Transverse colon (tissue), 4 donors: ENCODE measurements at regions of chr14 and their contacts with region 1.

Region 1: DNA sequence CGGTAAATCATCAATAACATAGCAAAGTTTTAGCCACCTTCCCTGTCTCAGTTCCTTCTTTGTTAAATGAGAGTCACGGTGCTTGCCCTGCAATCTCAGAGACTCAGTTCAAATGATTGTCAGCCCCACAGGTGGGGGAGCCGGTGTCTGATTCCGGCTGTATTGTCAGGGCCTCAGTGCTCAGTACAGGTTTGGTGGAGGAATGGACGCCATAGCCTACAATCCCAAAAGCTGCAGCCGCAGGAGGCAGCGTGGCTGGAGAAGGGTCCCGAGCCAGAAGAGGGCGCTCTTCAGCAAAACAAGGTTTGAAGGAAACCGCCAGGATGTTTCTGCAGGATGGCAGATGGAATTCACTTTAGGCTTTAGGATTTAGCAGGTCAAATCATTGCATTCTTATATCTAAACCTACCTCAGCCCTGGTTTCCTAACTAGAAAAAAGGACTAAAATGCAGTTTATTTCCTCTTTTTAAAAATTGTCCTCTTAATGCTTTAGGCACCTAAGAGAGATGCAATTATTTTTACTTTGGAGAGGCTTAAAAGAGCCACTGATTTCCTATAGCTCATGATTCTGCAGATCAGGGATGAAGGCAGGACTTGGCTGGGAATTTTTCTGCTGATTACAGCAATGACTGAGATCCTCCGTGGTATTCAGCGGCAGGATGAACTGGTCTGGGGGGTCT is 29.2 kb downstream of the FOS start:
- DNase-seq: peak; percentile 92
- H3K4me3 ChIP-seq: no peak overlapping the region
- H3K27ac ChIP-seq: no peak overlapping the region
- H3K4me1 ChIP-seq: peaks cover 6 to 21% (median 15%) of the 10 kb centered on the region in 4 donors
- H3K27me3 ChIP-seq: no peaks in the 10 kb centered on the region
- CTCF ChIP-seq: peak; percentile 87 to 96 (median 90)
- EP300 ChIP-seq: no peak
- POLR2A ChIP-seq: no peak

Region 2: GRCh38 chr14:75132382-75133086 is 175.3 kb before region 1 on chr14:
- in situ Hi-C with region 1: loop called (anchors 5 to 10 kb)
- intact Hi-C with region 1: no loop called
- DNase-seq: peak; percentile 42
- H3K4me3 ChIP-seq: no peak overlapping the region
- H3K27ac ChIP-seq: peak overlapping the region; percentile 26 to 69 (median 51)
- H3K4me1 ChIP-seq: peaks cover 11 to 29% (median 15%) of the 10 kb centered on the region in 4 donors
- H3K27me3 ChIP-seq: no peaks in the 10 kb centered on the region
- CTCF ChIP-seq: peak; percentile 64 to 92 (median 73)
- EP300 ChIP-seq: no peak
- POLR2A ChIP-seq: no peak

Region 3: DNA sequence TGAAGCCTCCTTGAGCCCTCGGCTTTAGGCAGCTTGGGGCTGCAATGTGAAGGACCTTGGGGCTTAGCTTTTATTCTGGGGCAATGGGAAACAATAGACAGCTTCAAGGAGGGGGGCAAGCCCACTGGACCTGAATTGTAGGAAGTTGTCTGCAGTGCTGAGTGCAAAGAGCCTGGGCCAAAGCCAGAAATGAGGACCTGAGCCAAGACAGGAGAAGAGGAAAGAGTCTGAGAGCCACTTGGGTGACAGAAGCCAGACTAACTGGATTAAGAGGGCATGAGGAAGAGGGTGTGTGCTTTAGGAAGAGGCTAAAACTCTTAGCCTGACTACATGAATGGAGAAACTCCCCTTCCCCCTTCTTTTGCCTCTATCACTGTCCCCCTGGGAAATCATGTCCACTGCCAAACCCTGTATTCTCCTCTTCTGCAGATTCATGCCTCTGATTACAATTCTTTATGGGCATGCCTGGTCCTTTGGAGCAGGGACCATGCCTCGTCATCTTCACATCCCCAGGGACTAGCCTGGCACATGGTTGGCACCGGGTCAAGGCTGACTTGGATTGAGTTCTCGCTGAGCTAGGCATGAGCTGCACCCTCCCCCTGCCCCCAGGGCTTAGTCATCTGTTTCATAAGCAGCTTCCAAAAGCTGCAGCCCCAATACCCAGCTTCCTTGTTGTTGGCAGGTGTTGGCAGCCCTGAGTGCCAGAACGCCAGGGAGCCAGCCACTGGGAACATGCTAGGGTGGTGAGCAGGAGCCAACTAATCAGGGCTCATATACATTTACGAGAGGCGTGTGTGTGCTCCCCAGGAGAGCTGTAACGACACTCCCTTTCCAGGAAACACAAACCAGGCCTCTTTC is 92.2 kb after region 1 on chr14:
- in situ Hi-C with region 1: loop called in 1 of 4 experiments (anchors 25 kb)
- intact Hi-C with region 1: no loop called
- DNase-seq: peak; percentile 94
- H3K4me3 ChIP-seq: no peak overlapping the region
- H3K27ac ChIP-seq: peak overlapping the region; percentile 87 to 91 (median 88)
- H3K4me1 ChIP-seq: peaks cover 22 to 29% (median 26%) of the 10 kb centered on the region in 4 donors
- H3K27me3 ChIP-seq: no peaks in the 10 kb centered on the region
- CTCF ChIP-seq: no peak
- EP300 ChIP-seq: no peak
- POLR2A ChIP-seq: no peak

Region 4: GRCh38 chr14:75452900-75453747 is 145.3 kb after region 1 on chr14:
- in situ Hi-C with region 1: no loop called
- intact Hi-C with region 1: no loop called
- DNase-seq: peak; percentile 50
- H3K4me3 ChIP-seq: no peak overlapping the region
- H3K27ac ChIP-seq: peak overlapping the region; percentile 82 to 90 (median 86)
- H3K4me1 ChIP-seq: peaks cover 59 to 96% (median 75%) of the 10 kb centered on the region in 4 donors
- H3K27me3 ChIP-seq: no peaks in the 10 kb centered on the region
- CTCF ChIP-seq: no peak
- EP300 ChIP-seq: no peak
- POLR2A ChIP-seq: no peak

Region 5: GRCh38 chr14:75479770-75480600 is 172.1 kb after region 1 on chr14:
- in situ Hi-C with region 1: loop called in 2 of 4 experiments (anchors 5 to 10 kb)
- intact Hi-C with region 1: no loop called
- DNase-seq: no peak
- H3K4me3 ChIP-seq: no peak overlapping the region
- H3K27ac ChIP-seq: no peak overlapping the region
- H3K4me1 ChIP-seq: peaks cover 0 to 10% (median 8%) of the 10 kb centered on the region in 4 donors
- H3K27me3 ChIP-seq: no peaks in the 10 kb centered on the region
- CTCF ChIP-seq: no peak
- EP300 ChIP-seq: no peak
- POLR2A ChIP-seq: no peak

Region 6: GRCh38 chr14:75487155-75487671 is 179.4 kb after region 1 on chr14:
- in situ Hi-C with region 1: loop called (anchors 5 to 10 kb)
- intact Hi-C with region 1: loop called (anchors 2 kb)
- DNase-seq: no peak
- H3K4me3 ChIP-seq: no peak overlapping the region
- H3K27ac ChIP-seq: no peak overlapping the region
- H3K4me1 ChIP-seq: no peaks in the 10 kb centered on the region
- H3K27me3 ChIP-seq: no peaks in the 10 kb centered on the region
- CTCF ChIP-seq: no peak
- EP300 ChIP-seq: no peak
- POLR2A ChIP-seq: no peak

Region 7: GRCh38 chr14:75493580-75494130 is 185.8 kb after region 1 on chr14:
- in situ Hi-C with region 1: loop called in 3 of 4 experiments (anchors 5 to 10 kb)
- intact Hi-C with region 1: loop called (anchors 2 kb)
- DNase-seq: no peak
- H3K4me3 ChIP-seq: no peak overlapping the region
- H3K27ac ChIP-seq: no peak overlapping the region
- H3K4me1 ChIP-seq: no peaks in the 10 kb centered on the region
- H3K27me3 ChIP-seq: no peaks in the 10 kb centered on the region
- CTCF ChIP-seq: no peak
- EP300 ChIP-seq: no peak
- POLR2A ChIP-seq: no peak